HepG2 (cell line): ENCODE measurements at regions of chr19 and their contacts with region 1.

Region 1: GRCh38 chr19:24048261-24048660 is 38.7 kb upstream of the ZNF254 start:
- DNase-seq: no peak
- ATAC-seq: peak; percentile 56; the same call in 2 of the 3 replicates
- H3K4me3 ChIP-seq: no peak overlapping the region
- H3K27ac ChIP-seq: no peak overlapping the region
- H3K4me1 ChIP-seq: no peaks in the 10 kb centered on the region
- H3K27me3 ChIP-seq: no peaks in the 10 kb centered on the region
- CTCF ChIP-seq: no peak
- EP300 ChIP-seq: no peak
- POLR2A ChIP-seq: no peak
- RAD21 ChIP-seq: no peak

Region 2: GRCh38 chr19:24033301-24033962 is 14.8 kb before region 1 on chr19:
- CTCF ChIA-PET with region 1: no interaction called
- POLR2A ChIA-PET with region 1: interaction called, 10 read pairs
- in situ Hi-C with region 1: no loop called
- intact Hi-C with region 1: no loop called
- DNase-seq: peak; percentile 90
- ATAC-seq: peak; percentile 97
- H3K4me3 ChIP-seq: peak overlapping the region; percentile 84 to 91 (median 85)
- H3K27ac ChIP-seq: peak overlapping the region; percentile 98
- H3K4me1 ChIP-seq: peaks cover 47% of the 10 kb centered on the region
- H3K27me3 ChIP-seq: no peaks in the 10 kb centered on the region; a peak in 1 of 5 replicates
- CTCF ChIP-seq: peak; percentile 56
- EP300 ChIP-seq: no peak
- POLR2A ChIP-seq: peak; percentile 83 to 86
- RAD21 ChIP-seq: peak; percentile 37